ENCODE measurements at regions of chr6 and their contacts with region 1.

Region 1: DNA sequence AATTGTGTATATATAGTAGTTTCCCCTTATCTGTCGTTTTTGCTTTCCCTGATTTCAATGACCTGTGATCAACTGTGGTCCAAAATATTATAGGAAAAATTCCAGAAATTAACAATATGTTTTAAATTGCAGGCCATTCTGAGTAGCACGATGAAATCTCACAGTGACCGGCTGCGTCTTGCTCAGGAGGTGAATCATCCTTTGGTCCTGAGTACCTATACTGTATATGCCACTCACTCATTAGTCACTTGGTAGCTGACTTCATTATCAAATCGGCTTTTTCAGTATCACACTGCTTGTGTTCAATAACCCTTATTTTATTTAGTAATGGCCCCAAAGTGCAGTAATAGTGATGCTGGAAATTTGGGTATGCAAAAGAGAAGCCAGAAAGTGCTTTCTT is 728.3 kb upstream of the EYS start:
- DNase-seq: no peak
- ATAC-seq: no peak

Region 2: GRCh38 chr6:66578362-66578761 is 143.0 kb after region 1 on chr6:
- intact Hi-C with region 1: loop called in 1 of 2 experiments (anchors 10 kb)
- DNase-seq: no peak
- ATAC-seq: no peak

Measured in left cardiac atrium (tissue), 4 donors.